Posterior vena cava (tissue), 2 donors: ENCODE measurements at regions of chr3 and their contacts with region 1.

Region 1: GRCh38 chr3:168047190-168047795 is 48.4 kb downstream of the GOLIM4 start:
- DNase-seq: no peak

Region 2: GRCh38 chr3:167918686-167919085 is 128.6 kb before region 1 on chr3:
- intact Hi-C with region 1: no loop called
- DNase-seq: no peak

Region 3: DNA sequence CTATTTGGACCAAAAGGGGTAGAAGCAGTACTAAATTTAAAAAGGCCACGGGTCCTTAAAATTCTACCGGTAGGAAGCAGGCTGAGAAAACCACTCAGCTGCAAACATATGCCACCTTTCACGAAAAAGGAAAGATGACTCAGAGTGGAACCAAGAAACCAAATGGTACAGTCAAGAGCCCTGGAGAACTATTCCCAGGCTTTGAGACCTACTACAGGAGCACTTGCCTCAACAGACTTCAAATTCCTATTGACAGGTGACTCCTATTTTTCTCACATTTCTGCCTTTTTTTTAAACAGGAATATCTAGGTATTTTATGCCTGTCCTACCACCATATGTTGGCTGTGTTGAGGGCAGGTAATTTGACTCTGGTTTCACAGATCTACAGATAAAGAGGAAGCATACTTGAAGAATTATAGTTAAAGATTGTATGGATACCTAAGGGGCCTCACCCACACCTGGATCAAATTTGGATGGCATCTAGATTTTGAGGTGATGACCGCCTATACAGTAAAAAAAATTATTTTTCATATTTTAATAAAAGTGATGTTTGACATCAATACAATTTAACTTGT is 38.3 kb after region 1 on chr3:
- intact Hi-C with region 1: no loop called
- DNase-seq: no peak

Region 4: GRCh38 chr3:168165390-168166269 is 118.3 kb after region 1 on chr3:
- intact Hi-C with region 1: loop called (anchors 2 to 5 kb)
- DNase-seq: no peak